PC-3 (cell line): ENCODE measurements at regions of chr6 and their contacts with region 1.

Region 1: DNA sequence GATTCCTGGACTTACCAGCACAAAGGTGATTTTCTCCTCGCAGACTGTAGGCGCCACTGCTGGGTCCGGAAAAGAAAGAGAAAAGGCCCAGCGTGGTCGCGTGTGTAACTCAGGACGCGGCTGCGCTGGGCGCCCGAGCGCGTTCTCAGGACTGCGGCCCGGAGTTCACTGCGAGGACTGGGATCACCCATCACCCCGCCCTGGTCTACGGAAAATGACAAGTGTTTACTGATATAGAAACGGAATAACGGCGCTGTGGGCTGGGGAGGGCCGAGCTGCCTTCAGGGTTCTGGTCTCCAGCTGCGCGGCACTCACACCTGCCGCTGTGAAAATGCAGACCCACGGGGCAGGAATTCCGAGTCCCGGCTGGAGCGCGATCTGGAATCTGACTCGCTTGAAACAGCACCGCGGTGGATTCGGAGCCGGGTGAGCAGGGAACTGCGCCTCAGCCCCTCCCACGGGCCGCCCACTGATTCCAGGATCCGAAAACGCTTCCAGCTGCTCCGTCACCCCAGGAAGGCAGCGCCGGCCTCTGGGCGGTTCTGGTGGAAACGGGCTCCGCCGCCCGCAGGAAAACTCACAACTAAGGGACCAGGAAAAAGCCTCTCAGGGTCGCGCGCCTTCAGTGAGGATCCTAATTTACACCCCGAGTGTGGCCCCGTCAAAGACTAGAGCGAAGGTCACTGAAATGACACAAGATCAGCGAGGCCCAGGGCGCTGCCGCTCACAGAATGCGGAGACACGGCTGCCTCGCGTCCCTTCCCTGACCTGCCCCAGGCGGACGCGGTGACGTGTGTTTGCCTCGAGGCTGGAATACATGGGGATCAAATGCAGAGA is 34.5 kb downstream of the HLA-A start:
- DNase-seq: peak; percentile 80
- ATAC-seq: peak; percentile 93
- H3K4me3 ChIP-seq: peak overlapping the region; percentile 71
- H3K27ac ChIP-seq: peak overlapping the region; percentile 61
- H3K4me1 ChIP-seq: peaks cover 16% of the 10 kb centered on the region
- H3K27me3 ChIP-seq: no peaks in the 10 kb centered on the region
- CTCF ChIP-seq: peak; percentile 41

Region 2: DNA sequence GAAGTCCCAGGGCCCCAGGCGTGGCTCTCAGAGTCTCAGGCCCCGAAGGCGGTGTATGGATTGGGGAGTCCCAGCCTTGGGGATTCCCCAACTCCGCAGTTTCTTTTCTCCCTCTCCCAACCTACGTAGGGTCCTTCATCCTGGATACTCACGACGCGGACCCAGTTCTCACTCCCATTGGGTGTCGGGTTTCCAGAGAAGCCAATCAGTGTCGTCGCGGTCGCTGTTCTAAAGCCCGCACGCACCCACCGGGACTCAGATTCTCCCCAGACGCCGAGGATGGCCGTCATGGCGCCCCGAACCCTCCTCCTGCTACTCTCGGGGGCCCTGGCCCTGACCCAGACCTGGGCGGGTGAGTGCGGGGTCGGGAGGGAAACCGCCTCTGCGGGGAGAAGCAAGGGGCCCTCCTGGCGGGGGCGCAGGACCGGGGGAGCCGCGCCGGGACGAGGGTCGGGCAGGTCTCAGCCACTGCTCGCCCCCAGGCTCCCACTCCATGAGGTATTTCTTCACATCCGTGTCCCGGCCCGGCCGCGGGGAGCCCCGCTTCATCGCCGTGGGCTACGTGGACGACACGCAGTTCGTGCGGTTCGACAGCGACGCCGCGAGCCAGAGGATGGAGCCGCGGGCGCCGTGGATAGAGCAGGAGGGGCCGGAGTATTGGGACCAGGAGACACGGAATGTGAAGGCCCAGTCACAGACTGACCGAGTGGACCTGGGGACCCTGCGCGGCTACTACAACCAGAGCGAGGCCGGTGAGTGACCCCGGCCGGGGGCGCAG is 34.3 kb before region 1 on chr6 and contains the start of gene HLA-A:
- CTCF ChIA-PET with region 1: no interaction called
- POLR2A ChIA-PET with region 1: interaction called, 7 read pairs
- intact Hi-C with region 1: loop called (anchors 2 kb)
- DNase-seq: peak; percentile 95
- ATAC-seq: peak; percentile 97
- H3K4me3 ChIP-seq: peak within 1 kb of the TSS; percentile 87
- H3K27ac ChIP-seq: peak within 1 kb of the TSS; percentile 19; the same call in 1 of the 2 replicates
- H3K4me1 ChIP-seq: 0 out of 2 replicates have a peak, but pooled peaks cover 14% of the 10 kb centered on the region
- H3K27me3 ChIP-seq: no peaks in the 10 kb centered on the region
- CTCF ChIP-seq: no peak; the same call in 1 of the 2 replicates
- total RNA-seq, gene HLA-A: 426 and 435 TPM in 2 replicates